ENCODE measurements at regions of chr11 and their contacts with region 1.

Region 1: DNA sequence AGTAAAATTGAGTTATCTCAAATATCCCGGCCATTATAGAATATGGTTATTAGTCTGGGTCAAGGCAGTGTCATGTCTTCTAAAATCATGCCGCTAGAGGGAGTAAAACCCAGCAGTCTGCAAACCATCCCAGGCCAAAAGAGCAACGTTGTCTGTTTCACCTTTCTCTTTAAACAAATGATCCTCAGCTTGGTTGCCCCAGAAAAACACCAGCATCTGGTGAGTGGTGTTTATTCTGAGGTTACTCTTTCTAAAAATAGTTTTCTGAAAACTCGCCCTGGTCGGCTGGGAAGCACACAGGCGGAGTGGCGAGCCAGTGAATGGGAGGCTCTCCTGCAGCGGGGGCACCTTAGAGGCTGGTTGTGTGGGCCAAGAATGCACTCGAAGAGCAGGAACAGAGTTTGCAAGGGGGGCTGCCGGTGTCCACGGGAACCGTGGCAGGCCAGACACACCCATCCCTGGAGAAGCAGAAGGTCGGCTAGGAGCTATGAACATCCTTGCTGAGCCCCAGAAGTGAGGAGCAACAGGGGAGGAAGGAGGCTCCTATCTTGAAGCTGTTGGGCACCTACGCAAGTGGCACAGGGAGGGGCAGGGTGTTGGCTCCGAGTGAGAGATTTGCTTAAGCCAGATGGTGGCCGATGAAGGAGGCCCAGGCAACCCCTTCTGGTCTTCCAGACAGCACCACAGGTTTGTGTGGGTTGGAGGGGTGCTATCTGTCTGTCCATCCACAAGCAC is 297.1 kb downstream of the ETS1 start:
- DNase-seq: peak; percentile 80
- H3K4me3 ChIP-seq: peak overlapping the region; percentile 19
- H3K27ac ChIP-seq: peak overlapping the region; percentile 77
- H3K4me1 ChIP-seq: peaks cover 11% of the 10 kb centered on the region
- H3K27me3 ChIP-seq: no peaks in the 10 kb centered on the region
- CTCF ChIP-seq: peak; percentile 80

Region 2: DNA sequence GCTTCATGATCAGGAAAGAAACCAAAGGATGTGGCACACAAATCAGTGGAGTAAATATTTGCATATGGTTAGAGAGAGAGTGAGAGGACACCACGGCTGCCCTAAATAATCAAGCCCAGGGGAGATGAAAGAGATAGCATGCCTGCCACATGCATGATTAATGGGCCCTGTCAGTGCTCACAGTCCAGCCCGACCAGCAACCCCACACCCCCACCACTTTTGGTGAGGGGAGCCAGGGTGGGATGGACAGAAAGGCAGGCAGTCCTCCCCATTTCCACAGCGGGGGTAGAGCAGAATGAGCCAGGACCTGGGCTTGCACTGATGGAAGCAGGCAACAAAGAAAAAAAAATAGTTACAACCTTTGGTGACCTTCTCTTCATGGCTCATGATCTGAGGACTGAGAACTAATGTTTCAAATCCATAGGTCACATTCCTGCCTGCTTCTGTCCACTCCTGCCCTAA is 248.0 kb before region 1 on chr11:
- intact Hi-C with region 1: no loop called
- DNase-seq: no peak
- H3K4me3 ChIP-seq: no peak overlapping the region
- H3K27ac ChIP-seq: no peak overlapping the region
- H3K4me1 ChIP-seq: no peaks in the 10 kb centered on the region
- H3K27me3 ChIP-seq: no peaks in the 10 kb centered on the region
- CTCF ChIP-seq: no peak

Region 3: GRCh38 chr11:128361451-128362020 is 71.3 kb after region 1 on chr11:
- intact Hi-C with region 1: no loop called
- DNase-seq: no peak
- H3K4me3 ChIP-seq: no peak overlapping the region
- H3K27ac ChIP-seq: no peak overlapping the region
- H3K4me1 ChIP-seq: no peaks in the 10 kb centered on the region
- H3K27me3 ChIP-seq: no peaks in the 10 kb centered on the region
- CTCF ChIP-seq: no peak

Region 4: DNA sequence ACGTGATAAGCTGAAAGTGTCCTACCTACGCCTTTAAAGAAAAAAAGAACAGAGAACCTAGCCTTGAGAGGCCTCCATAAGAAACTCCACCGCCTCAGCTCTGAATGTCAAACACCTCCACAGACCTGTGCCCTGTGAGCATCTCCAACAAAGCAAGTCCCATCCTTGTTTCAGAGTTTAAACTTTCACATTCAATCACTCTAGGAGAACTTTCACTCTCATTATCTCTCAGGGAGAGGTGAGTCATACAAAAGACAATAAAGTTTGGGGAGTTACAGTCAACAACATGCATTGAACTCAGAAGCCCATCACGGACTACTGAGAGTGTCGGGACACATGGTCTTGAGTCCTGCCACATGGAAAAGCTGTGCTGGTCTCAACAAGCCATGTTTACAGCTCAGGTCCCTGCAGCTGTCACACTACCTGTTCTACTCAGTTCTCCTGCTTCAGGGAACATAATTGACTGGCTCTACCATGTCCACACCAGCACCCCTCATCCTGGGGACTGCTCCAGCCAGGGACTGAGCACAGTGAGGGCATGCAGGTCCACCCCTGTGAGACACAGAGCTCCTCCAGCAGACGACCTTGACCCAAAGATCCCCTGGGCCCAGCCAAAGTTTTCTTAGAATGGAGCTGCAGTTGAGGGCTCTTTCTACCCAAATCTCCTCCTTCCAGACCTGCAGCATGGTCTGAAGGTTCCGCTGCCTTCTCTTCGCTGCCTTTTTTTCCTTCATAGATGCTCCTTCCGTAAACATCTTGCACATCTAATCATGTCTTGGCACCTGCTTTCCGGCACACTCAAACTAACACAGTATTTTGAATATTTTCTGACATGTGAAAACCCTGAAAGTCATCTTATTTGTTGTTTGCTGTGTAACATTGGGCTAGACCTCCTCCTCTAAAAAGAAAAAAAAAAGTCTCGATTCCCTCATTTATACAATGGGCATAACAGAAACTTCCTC is 182.1 kb after region 1 on chr11:
- intact Hi-C with region 1: loop called (anchors 10 kb)
- DNase-seq: no peak
- H3K4me3 ChIP-seq: no peak overlapping the region
- H3K27ac ChIP-seq: peak overlapping the region; percentile 60
- H3K4me1 ChIP-seq: peaks cover 40% of the 10 kb centered on the region
- H3K27me3 ChIP-seq: no peaks in the 10 kb centered on the region
- CTCF ChIP-seq: no peak

Region 5: GRCh38 chr11:128630367-128631230 is 340.3 kb after region 1 on chr11:
- intact Hi-C with region 1: loop called (anchors 5 kb)
- DNase-seq: peak; percentile 93
- H3K4me3 ChIP-seq: no peak overlapping the region
- H3K27ac ChIP-seq: no peak overlapping the region
- H3K4me1 ChIP-seq: no peaks in the 10 kb centered on the region
- H3K27me3 ChIP-seq: no peaks in the 10 kb centered on the region
- CTCF ChIP-seq: peak; percentile 92